ENCODE measurements at regions of chr3 and their contacts with region 1.

Region 1: GRCh38 chr3:129593595-129594339 is 12.7 kb downstream of the PLXND1 start:
- DNase-seq: peak; percentile 85
- H3K4me3 Mint-ChIP-seq: no peak overlapping the region
- H3K27ac Mint-ChIP-seq: no peak overlapping the region
- H3K4me1 Mint-ChIP-seq: peaks cover 14% of the 10 kb centered on the region
- H3K27me3 Mint-ChIP-seq: no peaks in the 10 kb centered on the region

Region 2: GRCh38 chr3:129576514-129577352 is 17.0 kb before region 1 on chr3:
- CTCF ChIA-PET with region 1: no interaction called
- POLR2A ChIA-PET with region 1: interaction called, 5 read pairs
- intact Hi-C with region 1: loop called (anchors 2 kb)
- DNase-seq: peak; percentile 72
- H3K4me3 Mint-ChIP-seq: peak overlapping the region; percentile 3
- H3K27ac Mint-ChIP-seq: peak overlapping the region; percentile 74
- H3K4me1 Mint-ChIP-seq: peaks cover 23% of the 10 kb centered on the region
- H3K27me3 Mint-ChIP-seq: no peaks in the 10 kb centered on the region

Measured in activated CD4-positive, alpha-beta memory T cell treated with anti-CD3 and anti-CD28 coated beads for 36 hours (primary cell).